Caco-2 (cell line): ENCODE measurements at regions of chr17 and their contacts with region 1.

Region 1: GRCh38 chr17:35764123-35764991 is 3.7 kb downstream of the C17orf50 start:
- DNase-seq: peak; percentile 92 to 98
- H3K4me3 ChIP-seq: peak overlapping the region; percentile 65
- H3K4me3 Mint-ChIP-seq: peak overlapping the region; percentile 76
- H3K27ac Mint-ChIP-seq: peak overlapping the region; percentile 75
- H3K4me1 ChIP-seq: peaks cover 15% of the 10 kb centered on the region
- H3K4me1 Mint-ChIP-seq: peaks cover 9% of the 10 kb centered on the region
- H3K27me3 ChIP-seq: no peaks in the 10 kb centered on the region
- H3K27me3 Mint-ChIP-seq: no peaks in the 10 kb centered on the region
- CTCF ChIP-seq: peak; percentile 89 to 97

Region 2: DNA sequence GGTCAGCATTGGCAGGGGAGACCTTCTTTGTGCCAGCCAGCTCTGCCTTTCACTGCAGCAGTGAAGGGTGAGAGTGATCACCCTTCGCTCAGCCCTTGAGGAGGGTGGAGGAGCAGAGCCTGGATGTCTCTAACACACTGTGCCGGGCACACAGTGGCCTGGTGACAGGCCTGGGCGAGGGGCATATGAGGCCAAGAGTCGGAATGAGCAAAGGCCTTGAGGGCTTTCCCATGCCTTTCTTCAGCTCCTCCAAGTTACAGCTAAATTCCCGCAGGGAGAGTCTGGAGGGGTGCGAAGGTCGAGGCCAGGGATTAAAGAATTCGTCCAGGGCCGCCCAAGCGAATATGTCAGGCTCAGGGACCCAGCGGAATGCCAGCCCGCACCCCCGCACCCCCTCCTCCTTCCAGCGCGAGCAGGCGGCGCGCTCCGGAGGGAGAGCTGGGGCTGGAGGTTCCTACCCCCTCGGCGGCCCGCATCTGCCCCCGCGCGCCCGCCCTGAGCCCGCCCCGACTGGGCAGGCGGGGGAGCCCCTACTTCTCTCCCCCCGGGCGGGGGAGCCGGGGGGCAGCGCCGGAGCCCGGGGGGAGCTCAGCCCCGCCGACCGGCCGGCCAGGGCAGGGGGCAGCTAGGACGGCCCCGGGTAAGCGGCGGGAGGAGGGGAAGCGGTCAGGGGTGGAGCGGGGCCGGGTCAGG is 33.0 kb before region 1 on chr17 and contains the start of gene RASL10B:
- CTCF ChIA-PET with region 1: interaction called, 16 read pairs
- POLR2A ChIA-PET with region 1: no interaction called
- intact Hi-C with region 1: no loop called
- DNase-seq: peak; percentile 83 to 84
- H3K4me3 ChIP-seq: peak within 1 kb of the TSS; percentile 46
- H3K4me3 Mint-ChIP-seq: peak within 1 kb of the TSS; percentile 75
- H3K27ac Mint-ChIP-seq: peak within 1 kb of the TSS; percentile 58
- H3K4me1 ChIP-seq: peaks cover 7% of the 10 kb centered on the region
- H3K4me1 Mint-ChIP-seq: peaks cover 9% of the 10 kb centered on the region
- H3K27me3 ChIP-seq: no peaks in the 10 kb centered on the region
- H3K27me3 Mint-ChIP-seq: no peaks in the 10 kb centered on the region
- CTCF ChIP-seq: no peak
- total RNA-seq, gene RASL10B: 11.4 and 13.3 TPM in 2 replicates

Region 3: DNA sequence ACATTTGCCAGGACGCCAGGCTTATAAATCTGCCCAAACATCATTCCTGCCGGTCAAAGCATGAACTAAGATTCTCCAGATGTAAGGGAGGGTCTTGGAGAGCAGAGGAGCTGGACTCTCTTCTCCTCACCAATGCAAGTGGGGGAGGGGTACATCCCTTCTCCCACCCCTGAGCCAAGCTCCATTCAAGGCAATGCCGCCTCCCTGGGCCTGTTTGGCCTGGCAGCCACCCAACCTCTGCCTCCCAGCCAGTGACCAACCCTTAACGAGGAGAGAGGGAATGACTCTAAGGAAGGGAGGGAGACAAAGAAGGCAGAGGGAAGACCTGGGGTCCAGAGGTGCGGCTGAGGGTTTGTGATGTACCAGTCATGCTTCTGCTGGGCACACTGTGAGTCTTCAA is 10.1 kb after region 1 on chr17:
- CTCF ChIA-PET with region 1: interaction called, 25 read pairs
- POLR2A ChIA-PET with region 1: no interaction called
- intact Hi-C with region 1: no loop called
- DNase-seq: no peak
- H3K4me3 ChIP-seq: no peak overlapping the region
- H3K4me3 Mint-ChIP-seq: no peak overlapping the region
- H3K27ac Mint-ChIP-seq: no peak overlapping the region
- H3K4me1 ChIP-seq: no peaks in the 10 kb centered on the region
- H3K4me1 Mint-ChIP-seq: peaks cover 7% of the 10 kb centered on the region
- H3K27me3 ChIP-seq: no peaks in the 10 kb centered on the region
- H3K27me3 Mint-ChIP-seq: peaks cover 8% of the 10 kb centered on the region
- CTCF ChIP-seq: no peak

Region 4: GRCh38 chr17:35808962-35809854 is 44.9 kb after region 1 on chr17 and contains the start of gene TAF15:
- CTCF ChIA-PET with region 1: interaction called, 83 read pairs
- POLR2A ChIA-PET with region 1: interaction called, 44 read pairs
- intact Hi-C with region 1: loop called (anchors 1 kb)
- DNase-seq: peak; percentile 99
- H3K4me3 ChIP-seq: peak within 1 kb of the TSS; percentile 97
- H3K4me3 Mint-ChIP-seq: peak within 1 kb of the TSS; percentile 92
- H3K27ac Mint-ChIP-seq: peak within 1 kb of the TSS; percentile 99
- H3K4me1 ChIP-seq: peaks cover 12% of the 10 kb centered on the region; the same call in 1 of the 2 replicates
- H3K4me1 Mint-ChIP-seq: peaks cover 16% of the 10 kb centered on the region
- H3K27me3 ChIP-seq: no peaks in the 10 kb centered on the region
- H3K27me3 Mint-ChIP-seq: no peaks in the 10 kb centered on the region
- CTCF ChIP-seq: peak; percentile 69 to 95
- total RNA-seq, gene TAF15: 335 and 350 TPM in 2 replicates